ENCODE measurements at regions of chr1 and their contacts with region 1.

Region 1: DNA sequence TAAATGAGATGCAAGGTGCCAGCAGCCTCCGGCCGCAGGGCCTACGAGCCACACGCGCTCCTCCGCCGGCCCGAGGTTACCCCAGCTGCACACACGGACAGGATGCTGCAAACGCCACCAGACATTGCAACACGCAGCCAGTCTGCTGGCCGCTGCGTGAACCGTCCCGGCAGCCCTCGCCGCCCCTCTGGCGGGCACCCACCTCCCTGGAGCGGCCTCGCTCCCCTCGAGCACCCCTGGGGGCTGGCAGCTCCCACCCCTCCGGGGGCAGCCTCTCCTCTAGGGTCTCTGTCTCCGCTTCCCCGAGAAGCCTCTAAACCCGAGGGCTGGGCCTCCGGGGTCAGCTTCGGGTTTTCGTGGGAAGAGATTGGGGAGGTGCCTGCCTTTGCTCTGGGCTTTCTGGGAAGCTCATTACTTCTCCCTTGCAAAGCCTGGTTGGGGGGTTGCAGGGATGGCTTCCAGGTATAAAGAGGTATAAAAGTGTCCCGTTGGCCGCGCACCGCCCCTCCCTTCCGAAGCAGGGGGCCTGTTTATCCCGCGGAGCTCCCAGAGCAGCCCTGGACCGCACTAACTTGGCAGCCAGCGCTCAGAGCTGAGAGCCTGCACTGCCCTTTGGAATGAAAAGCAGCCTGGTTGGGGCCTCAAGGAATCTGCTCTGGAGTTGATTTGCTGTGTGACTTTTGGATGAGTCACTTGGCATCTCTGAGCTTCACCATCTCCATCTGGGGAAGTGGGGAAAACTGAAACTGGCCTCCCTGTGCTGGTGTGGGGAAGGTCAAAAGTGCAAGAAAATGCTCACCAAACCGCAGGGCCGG is 21.8 kb downstream of the DHRS3 start:
- DNase-seq: peak; percentile 90 to 95
- H3K4me3 ChIP-seq: peak overlapping the region; percentile 56; the same call in 1 of the 2 replicates
- H3K27ac ChIP-seq: peak overlapping the region; percentile 100
- H3K4me1 ChIP-seq: peaks cover 68% of the 10 kb centered on the region
- H3K27me3 ChIP-seq: no peaks in the 10 kb centered on the region
- CTCF ChIP-seq: no peak

Region 2: DNA sequence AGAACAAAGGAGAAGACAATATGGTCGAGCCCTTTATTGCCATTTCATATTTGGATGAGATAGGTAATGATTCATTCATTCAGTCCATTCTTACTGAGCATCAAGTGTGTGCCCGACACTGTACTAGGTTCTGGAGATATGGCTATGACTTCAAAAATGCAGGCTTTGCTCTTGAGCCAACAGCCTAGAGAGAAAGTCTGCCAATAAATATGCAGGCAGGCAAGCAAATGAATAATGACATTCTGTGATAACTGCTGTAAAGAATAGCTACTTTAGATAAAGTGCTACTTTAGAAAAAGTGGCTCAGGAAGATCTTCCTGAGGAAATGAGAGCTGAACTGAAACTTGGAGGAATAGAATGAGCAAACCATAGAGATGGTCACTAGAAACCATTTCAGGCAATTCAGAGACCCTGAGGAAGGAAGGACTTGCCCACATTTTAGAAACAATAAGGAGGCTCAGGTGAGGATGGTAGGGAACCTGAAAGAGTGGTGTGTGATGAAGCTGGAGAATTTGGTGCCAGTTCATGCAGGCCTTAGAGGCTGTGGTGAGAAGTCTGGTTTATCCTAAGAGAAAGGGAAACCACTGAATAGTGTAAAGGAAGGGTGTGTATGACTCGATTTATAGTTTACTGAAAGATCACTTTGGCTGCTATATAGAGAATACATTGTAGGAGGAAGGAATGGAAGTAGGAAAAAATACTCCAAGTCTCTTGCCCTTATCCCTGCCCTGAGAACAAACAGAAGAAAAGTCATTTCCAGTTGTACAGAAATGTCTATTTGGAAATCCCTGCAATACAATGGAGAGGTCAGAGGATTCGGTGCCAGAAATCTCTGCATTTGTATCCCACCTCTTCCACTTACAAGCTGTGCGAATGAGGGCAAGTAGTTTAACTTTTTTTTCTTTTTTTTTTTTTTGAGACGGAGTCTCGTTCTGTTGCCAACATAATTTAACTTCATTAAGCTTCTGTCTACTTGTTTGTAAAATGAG is 198.5 kb before region 1 on chr1:
- CTCF ChIA-PET with region 1: no interaction called
- POLR2A ChIA-PET with region 1: interaction called, 13 read pairs
- intact Hi-C with region 1: no loop called
- DNase-seq: no peak
- H3K4me3 ChIP-seq: no peak overlapping the region
- H3K27ac ChIP-seq: no peak overlapping the region
- H3K4me1 ChIP-seq: no peaks in the 10 kb centered on the region
- H3K27me3 ChIP-seq: no peaks in the 10 kb centered on the region
- CTCF ChIP-seq: no peak

Region 3: GRCh38 chr1:12434174-12434573 is 162.0 kb before region 1 on chr1:
- CTCF ChIA-PET with region 1: no interaction called
- POLR2A ChIA-PET with region 1: interaction called, 17 read pairs
- intact Hi-C with region 1: no loop called
- DNase-seq: no peak
- H3K4me3 ChIP-seq: no peak overlapping the region
- H3K27ac ChIP-seq: peak overlapping the region; percentile 28
- H3K4me1 ChIP-seq: peaks cover 35% of the 10 kb centered on the region
- H3K27me3 ChIP-seq: no peaks in the 10 kb centered on the region
- CTCF ChIP-seq: no peak

Region 4: GRCh38 chr1:12454406-12455391 is 141.5 kb before region 1 on chr1:
- CTCF ChIA-PET with region 1: no interaction called
- POLR2A ChIA-PET with region 1: interaction called, 4 read pairs
- intact Hi-C with region 1: loop called (anchors 1 kb)
- DNase-seq: peak; percentile 52 to 81
- H3K4me3 ChIP-seq: no peak overlapping the region
- H3K27ac ChIP-seq: peak overlapping the region; percentile 55
- H3K4me1 ChIP-seq: peaks cover 42% of the 10 kb centered on the region
- H3K27me3 ChIP-seq: no peaks in the 10 kb centered on the region
- CTCF ChIP-seq: no peak

Region 5: GRCh38 chr1:12549460-12550349 is 46.5 kb before region 1 on chr1:
- CTCF ChIA-PET with region 1: no interaction called
- POLR2A ChIA-PET with region 1: no interaction called
- intact Hi-C with region 1: loop called (anchors 1 kb)
- DNase-seq: peak; percentile 94
- H3K4me3 ChIP-seq: peak overlapping the region; percentile 17; the same call in 1 of the 2 replicates
- H3K27ac ChIP-seq: peak overlapping the region; percentile 69
- H3K4me1 ChIP-seq: peaks cover 22% of the 10 kb centered on the region
- H3K27me3 ChIP-seq: no peaks in the 10 kb centered on the region
- CTCF ChIP-seq: no peak

Region 6: GRCh38 chr1:12572506-12572905 is 23.7 kb before region 1 on chr1:
- CTCF ChIA-PET with region 1: no interaction called
- POLR2A ChIA-PET with region 1: interaction called, 9 read pairs
- intact Hi-C with region 1: loop called (anchors 1 kb)
- DNase-seq: no peak
- H3K4me3 ChIP-seq: no peak overlapping the region
- H3K27ac ChIP-seq: no peak overlapping the region
- H3K4me1 ChIP-seq: peaks cover 20% of the 10 kb centered on the region
- H3K27me3 ChIP-seq: no peaks in the 10 kb centered on the region
- CTCF ChIP-seq: no peak

Measured in PC-9 (cell line).